Mammary epithelial cell (primary cell): ENCODE measurements at regions of chr4 and their contacts with region 1.

Region 1: DNA sequence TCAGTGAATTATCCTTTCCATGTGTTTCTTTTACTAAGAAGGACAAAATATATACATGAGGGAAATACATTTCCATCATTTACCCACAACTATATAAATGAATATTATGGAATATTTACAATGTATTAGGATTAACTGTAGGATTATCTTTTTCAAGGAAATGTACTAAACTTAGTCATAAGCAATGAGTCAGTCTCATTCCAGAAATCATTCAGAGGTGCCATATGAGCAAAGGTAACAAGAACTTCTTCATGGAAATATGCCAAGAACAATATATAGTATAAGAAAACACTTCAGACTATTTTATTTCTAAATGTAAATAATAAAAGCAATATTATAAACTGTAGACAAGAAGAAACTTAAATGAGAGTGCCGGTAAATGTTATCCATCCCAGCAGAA is 67.1 kb downstream of the USP38 start:
- DNase-seq: peak; percentile 74
- H3K4me3 ChIP-seq: no peak overlapping the region
- H3K27ac ChIP-seq: no peak overlapping the region
- H3K4me1 ChIP-seq: peaks cover 32% of the 10 kb centered on the region
- H3K27me3 ChIP-seq: no peaks in the 10 kb centered on the region
- CTCF ChIP-seq: no peak

Region 2: GRCh38 chr4:143313521-143313920 is 61.7 kb after region 1 on chr4:
- CTCF ChIA-PET with region 1: no interaction called
- dilution Hi-C with region 1: loop called (anchors 5 kb)
- in situ Hi-C with region 1: no loop called
- intact Hi-C with region 1: no loop called
- DNase-seq: no peak
- H3K4me3 ChIP-seq: no peak overlapping the region
- H3K27ac ChIP-seq: no peak overlapping the region
- H3K4me1 ChIP-seq: no peaks in the 10 kb centered on the region
- H3K27me3 ChIP-seq: no peaks in the 10 kb centered on the region
- CTCF ChIP-seq: no peak